ENCODE measurements at regions of chr2 and their contacts with region 1.

Region 1: GRCh38 chr2:61419129-61419528 is 51.8 kb downstream of the USP34 start:
- DNase-seq: peak; percentile 49
- H3K4me3 Mint-ChIP-seq: no peak overlapping the region
- H3K27ac Mint-ChIP-seq: peak overlapping the region; percentile 13
- H3K4me1 Mint-ChIP-seq: peaks cover 36% of the 10 kb centered on the region
- H3K27me3 Mint-ChIP-seq: no peaks in the 10 kb centered on the region

Region 2: DNA sequence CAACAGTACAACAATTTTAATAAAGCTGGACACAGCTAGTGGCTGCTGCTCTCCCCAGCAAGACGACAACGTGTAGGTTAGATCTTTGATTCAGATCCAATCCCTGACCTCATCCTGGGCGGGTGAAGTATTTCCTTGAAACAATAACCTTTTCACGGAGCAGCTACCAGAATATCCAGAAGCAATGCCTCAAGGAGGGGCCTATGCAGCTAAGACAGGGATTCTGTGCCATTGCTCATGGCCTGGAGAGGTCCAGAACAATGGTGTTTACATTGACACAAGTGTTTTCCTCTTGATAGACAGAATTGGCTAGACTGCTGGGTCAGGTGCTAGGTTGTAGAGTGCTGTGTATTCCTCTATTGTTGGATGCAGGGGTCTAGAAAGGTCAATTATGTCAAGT is 1385.8 kb before region 1 on chr2:
- CTCF ChIA-PET with region 1: no interaction called
- POLR2A ChIA-PET with region 1: no interaction called
- DNase-seq: no peak
- H3K4me3 Mint-ChIP-seq: no peak overlapping the region
- H3K27ac Mint-ChIP-seq: no peak overlapping the region
- H3K4me1 Mint-ChIP-seq: no peaks in the 10 kb centered on the region
- H3K27me3 Mint-ChIP-seq: no peaks in the 10 kb centered on the region

Region 3: DNA sequence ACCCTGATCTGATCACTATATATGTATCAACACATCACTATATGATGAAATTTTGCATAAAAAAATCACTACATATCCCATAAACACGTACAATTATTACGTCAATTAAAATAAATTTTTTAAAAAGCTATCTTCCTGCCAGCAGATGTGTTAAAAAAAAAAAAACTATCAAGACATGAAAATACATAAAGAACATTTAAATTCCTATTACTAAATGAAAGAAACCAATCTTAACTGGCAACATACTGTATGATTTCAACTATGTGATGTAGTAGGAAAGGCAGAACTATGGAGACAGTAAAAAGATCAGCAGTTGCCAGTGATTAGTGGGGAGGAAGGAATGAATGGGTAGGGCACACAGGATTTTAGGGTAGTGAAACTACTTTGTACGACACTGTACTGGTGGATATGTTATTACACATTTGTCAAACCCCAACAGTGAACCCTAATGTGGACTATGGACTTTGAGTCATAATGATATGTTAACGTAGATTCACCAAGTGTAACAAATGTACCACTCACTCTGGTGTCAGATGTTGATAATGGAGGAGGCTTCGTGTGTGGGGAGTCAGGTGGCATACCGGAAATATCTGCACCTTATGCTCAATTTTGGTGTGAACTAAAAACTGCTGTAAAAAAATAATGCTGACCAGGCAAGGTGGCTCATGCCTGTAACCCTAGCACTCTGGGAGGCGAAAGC is 24.4 kb after region 1 on chr2:
- CTCF ChIA-PET with region 1: no interaction called
- POLR2A ChIA-PET with region 1: interaction called, 14 read pairs
- DNase-seq: no peak
- H3K4me3 Mint-ChIP-seq: no peak overlapping the region
- H3K27ac Mint-ChIP-seq: no peak overlapping the region
- H3K4me1 Mint-ChIP-seq: peaks cover 29% of the 10 kb centered on the region
- H3K27me3 Mint-ChIP-seq: no peaks in the 10 kb centered on the region